Right ventricle myocardium superior (tissue), 1 donor: ENCODE measurements at regions of chr17 and their contacts with region 1.

Region 1: GRCh38 chr17:17001874-17002520 is 30.1 kb upstream of the TNFRSF13B start:
- DNase-seq: peak; percentile 89
- ATAC-seq: peak; percentile 89

Region 2: DNA sequence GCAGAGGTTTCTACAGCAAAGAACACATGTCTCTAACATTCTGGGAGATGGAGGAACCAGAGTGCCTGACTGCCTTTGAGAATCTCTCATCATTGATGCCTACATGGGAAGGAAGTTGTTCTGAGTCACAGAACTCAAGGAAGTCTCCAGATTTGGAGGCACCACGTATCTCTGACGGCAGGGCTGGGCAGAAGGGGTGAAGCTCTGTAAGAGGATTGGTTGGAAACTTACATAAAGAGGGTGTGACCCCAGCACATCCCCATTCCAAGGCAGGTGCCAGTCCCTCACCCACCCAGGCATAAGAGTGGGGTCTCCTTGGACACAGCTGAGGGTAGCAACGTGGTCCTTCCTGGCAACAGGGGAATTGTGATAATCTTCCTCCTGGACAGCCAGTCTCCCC is 47.5 kb before region 1 on chr17:
- intact Hi-C with region 1: no loop called
- DNase-seq: no peak
- ATAC-seq: no peak

Region 3: DNA sequence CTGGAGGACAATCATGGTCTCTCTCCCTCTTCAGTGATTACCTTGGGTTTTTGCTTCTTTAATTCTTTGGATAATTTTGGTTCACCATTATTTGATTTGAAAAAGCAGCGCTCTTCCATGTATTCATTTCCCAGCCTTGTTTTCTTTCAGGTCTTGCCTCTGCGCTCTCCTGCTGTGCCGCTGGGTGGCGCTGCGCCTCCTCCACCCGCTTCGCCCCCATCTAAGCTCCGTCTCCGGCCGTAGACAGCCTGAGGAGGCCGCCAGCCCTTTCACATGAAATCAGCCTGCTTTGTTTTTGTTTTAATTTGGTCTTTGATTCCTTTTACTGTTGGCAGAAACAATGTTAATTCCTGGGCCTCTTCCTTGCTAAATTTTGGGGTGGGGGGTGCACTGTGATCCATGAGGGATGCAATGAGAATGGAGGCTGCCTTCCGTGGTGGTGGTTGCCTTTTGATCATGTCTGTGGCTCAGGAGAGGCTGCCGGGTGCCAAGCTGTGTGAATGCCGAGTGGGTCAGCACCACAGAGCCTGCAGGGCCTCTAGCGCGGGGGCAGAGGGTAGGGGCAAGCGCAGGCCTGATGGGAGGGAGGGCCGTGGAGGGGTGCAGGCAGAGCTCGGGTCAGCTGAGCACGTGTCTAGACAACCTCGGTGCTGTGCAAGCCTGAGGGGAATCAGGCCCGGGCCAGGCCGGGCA is 140.0 kb after region 1 on chr17:
- intact Hi-C with region 1: loop called (anchors 10 kb)
- DNase-seq: peak; percentile 58
- ATAC-seq: peak; percentile 56

Region 4: DNA sequence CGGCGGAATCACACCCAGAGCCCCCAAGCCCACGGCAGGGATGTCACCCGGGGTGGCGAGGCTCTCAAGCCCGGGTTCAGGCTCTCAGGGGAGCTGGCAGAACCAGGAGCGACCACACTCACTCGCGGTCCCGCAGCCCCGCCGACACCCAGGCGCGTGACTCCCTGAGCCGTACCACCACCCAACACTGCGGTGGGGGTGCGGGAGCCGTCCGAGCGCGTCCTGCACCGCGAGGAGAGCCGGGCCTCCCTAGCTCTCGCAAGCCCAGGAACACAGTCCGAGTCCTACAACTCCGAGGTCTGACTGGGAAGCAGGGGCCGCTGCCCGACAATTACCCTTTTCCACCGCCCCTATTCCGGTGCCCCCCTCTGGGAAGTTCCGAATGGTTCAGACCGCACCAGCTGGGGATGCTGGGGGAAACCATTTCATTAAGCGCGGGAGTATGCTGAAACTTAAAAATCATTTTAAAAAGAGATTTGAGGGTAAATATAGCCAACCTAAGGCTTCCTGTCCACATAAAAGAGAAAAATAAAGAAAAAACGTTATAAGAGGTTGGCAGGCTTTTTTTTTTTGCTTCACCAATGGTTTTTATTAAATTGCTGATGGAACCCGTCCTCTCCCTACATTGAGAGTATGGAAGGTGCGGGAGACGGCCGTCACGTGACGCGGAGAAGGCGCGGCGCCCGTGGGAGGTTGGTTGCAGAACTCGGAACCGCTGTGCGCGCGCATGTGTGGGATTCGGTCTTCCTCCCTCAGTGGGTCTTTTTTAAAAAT is 235.2 kb after region 1 on chr17 and contains the start of gene FLCN:
- intact Hi-C with region 1: loop called (anchors 10 kb)
- DNase-seq: peak; percentile 98
- ATAC-seq: peak; percentile 97
- total RNA-seq, gene FLCN: 52.3 TPM

Region 5: GRCh38 chr17:17303010-17303846 is 301.2 kb after region 1 on chr17 and contains the start of gene NT5M:
- intact Hi-C with region 1: loop called (anchors 10 kb)
- DNase-seq: peak; percentile 90
- ATAC-seq: peak; percentile 91
- total RNA-seq, gene NT5M: 8.5 TPM